Head of caudate nucleus (tissue), 42 donors: ENCODE measurements at regions of chr9 and their contacts with region 1.

Region 1: GRCh38 chr9:130870491-130871381 is 25.9 kb downstream of the QRFP start:
- DNase-seq: peak in 1 of 42 donors; percentile 40

Region 2: DNA sequence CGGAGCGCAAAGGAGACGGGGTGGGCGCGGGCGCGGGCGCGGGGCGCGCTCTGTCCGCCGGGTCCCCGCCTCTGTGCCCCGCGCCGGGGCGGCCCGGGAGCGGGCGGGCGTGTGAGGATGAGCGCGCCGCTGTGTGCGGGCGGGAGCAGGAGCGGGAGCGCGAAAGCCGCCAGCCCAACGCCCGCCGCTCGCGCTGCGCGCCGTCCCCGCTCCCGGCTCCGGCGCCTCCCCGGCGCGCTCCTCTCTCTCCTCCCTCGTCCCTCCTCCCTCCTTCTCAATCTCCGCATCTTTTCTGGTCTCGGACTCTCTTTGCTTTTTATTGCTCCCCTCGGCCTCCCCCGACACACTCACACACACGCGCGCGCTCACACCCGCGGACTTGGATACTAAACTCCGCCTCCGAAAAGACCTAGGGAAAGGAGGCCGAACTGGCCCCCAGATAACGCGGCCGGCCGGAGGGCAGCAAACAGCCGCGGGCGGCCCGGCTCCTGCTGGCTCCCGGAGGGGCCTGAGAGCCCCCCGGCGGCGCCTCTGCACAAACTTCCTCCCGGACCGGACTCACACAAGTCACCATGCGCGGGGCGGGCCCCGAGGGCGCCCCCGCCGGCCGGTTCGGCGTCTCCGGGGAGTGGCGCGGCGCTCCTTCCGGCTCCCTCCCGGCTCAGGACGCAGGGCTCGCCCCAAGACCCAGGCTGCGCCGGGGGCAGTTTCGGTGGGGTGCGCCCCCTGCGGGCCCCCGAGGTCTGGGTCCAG is 68.1 kb after region 1 on chr9 and contains the start of gene FIBCD1:
- intact Hi-C with region 1: loop called (anchors 5 kb)
- DNase-seq: peak in 12 of 42 donors; percentile 20 to 65 (median 37)

Region 3: DNA sequence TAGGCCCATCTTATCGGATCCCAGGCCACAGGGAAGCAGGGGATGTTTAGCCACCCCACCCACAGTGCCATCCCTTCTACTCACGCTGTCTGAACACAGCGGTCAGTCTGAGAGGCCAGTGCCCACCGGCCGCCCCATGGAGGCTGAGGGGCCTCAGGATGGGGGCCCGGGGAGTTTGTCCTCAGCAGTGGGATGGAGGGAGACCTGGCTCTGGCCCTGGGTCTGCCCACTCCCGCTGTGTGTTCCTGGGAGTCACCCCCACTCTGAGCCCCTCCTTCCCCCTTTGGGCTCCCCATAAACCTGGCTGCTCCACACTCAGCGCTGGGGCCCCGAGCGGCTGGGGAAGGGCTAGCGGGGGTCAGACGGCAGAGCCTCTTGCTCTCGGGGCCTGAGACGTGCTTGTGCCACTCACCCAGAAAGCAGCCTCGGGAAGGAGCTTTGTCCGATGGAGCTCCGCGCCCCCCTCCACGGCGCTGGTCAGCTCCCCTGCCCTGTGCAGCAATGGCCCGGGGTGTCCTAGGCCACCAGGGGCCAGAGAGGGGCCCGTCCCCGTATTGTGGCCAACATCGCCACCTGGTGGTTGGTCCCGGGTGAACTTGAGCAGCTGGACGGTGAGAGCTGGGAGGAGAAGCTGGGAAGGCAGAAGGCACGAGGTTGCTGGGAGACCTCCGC is 127.3 kb after region 1 on chr9:
- intact Hi-C with region 1: loop called (anchors 5 kb)
- DNase-seq: peak; percentile 33 to 93 (median 82)

Region 4: DNA sequence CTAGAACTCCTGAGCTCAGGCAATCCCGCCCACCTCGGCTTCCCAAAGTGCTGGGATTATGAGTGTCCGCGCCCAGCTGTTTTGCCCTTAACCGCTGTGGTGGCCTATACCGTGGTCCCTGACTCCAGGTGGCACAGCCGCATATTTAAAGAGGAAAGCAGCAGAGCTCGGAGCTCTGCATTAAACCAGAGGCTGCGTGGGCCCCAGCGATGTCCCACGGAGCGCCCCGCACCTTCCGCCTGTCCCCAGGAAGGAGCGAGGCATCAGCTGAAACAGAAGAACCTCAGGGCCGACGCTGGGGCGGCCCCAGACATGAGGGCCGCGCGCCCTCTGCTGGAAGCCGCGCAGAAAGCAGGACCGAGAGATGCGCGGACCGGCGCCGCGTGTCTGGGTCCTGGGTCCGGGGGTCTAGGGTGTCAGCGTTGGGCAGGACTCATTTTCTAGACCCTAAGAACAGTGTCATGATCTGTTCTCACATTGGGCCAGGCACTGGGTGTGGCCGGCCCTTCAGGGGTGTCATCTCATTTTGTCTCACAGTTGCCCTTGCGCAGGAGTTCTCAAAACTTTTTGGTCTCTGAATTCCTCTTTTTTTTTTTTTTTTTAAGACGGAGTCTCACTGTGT is 176.0 kb after region 1 on chr9:
- intact Hi-C with region 1: loop called (anchors 5 kb)
- DNase-seq: peak; percentile 49 to 89 (median 76)